Activated CD4-positive, alpha-beta memory T cell treated with anti-CD3 and anti-CD28 coated beads for 36 hours (primary cell): ENCODE measurements at regions of chr10 and their contacts with region 1.

Region 1: DNA sequence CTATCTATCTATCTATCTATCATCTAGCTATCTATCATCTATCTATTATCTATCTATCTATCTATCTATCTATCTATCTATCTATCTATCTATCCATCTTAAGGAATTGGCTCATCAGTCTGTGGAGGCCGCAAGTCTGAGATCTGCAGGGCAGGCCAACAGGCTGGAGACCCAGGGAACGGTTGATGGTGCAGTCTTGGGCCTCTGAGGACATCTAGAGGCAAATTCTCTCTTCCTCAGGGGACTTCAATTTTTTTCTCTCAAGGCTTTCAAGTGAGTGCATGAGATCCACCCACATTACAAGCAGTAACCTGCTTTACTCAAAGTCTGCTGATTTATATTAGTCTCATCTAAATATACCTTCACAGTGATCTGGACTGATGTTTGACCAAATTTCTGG is 197.0 kb downstream of the GLRX3 start:
- DNase-seq: no peak
- H3K4me3 Mint-ChIP-seq: no peak overlapping the region
- H3K27ac Mint-ChIP-seq: no peak overlapping the region
- H3K4me1 Mint-ChIP-seq: no peaks in the 10 kb centered on the region
- H3K27me3 Mint-ChIP-seq: no peaks in the 10 kb centered on the region

Region 2: DNA sequence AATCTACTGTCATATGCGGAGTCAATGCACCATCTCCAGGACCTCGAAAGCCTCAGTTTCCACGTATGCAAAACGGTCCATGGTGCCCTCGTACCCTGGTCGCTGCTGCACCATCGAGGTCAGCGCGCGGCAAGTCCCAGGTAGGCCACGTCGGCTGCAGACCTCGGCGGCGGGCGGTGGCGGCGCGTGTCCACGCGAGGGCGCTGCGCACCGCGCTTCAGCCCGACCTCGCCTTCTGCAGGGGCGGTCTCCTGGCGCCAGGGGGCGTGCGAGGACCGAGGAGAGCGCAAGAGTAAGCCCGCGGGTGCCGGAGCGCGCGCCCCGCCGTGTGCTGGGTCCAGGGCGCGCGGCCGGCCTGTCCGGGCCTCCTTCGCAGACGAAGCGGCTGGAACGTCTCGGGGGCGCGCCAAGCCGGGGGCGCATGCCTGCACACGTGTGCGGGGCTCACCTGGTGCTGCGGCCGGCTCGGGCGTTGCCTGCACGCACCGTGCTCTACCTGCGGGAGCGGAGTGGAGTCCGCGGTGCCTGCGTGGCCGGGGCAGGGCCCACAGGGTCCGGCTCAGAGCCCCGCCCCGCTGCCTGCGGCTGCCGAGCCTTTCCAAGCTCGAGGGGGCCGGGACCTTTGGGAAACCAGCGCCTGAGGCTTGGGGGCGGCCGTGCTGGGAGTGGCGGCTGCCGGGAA is 143.0 kb before region 1 on chr10:
- CTCF ChIA-PET with region 1: no interaction called
- POLR2A ChIA-PET with region 1: no interaction called
- intact Hi-C with region 1: loop called (anchors 5 kb)
- DNase-seq: peak; percentile 89
- H3K4me3 Mint-ChIP-seq: no peak overlapping the region
- H3K27ac Mint-ChIP-seq: no peak overlapping the region
- H3K4me1 Mint-ChIP-seq: peaks cover 2% of the 10 kb centered on the region
- H3K27me3 Mint-ChIP-seq: peaks cover 6% of the 10 kb centered on the region